ENCODE measurements at regions of chr9 and their contacts with region 1.

Region 1: GRCh38 chr9:72592502-72593403 is 71.3 kb downstream of the TMC1 start:
- DNase-seq: no peak
- H3K4me3 ChIP-seq: no peak overlapping the region
- H3K27ac ChIP-seq: peak overlapping the region in 3 of 4 donors; percentile 23 to 40 (median 33)
- H3K4me1 ChIP-seq: peaks cover 13 to 53% (median 31%) of the 10 kb centered on the region in 4 donors
- H3K27me3 ChIP-seq: no peaks in the 10 kb centered on the region
- CTCF ChIP-seq: peak; percentile 82 to 97 (median 88)
- EP300 ChIP-seq: no peak
- POLR2A ChIP-seq: no peak

Region 2: GRCh38 chr9:71806901-71807307 is 785.8 kb before region 1 on chr9:
- in situ Hi-C with region 1: loop called in 1 of 4 experiments (anchors 25 kb)
- intact Hi-C with region 1: no loop called
- DNase-seq: peak; percentile 62
- H3K4me3 ChIP-seq: no peak overlapping the region
- H3K27ac ChIP-seq: no peak overlapping the region
- H3K4me1 ChIP-seq: no peaks in the 10 kb centered on the region
- H3K27me3 ChIP-seq: no peaks in the 10 kb centered on the region
- CTCF ChIP-seq: peak; percentile 75 to 87 (median 83)
- EP300 ChIP-seq: no peak
- POLR2A ChIP-seq: no peak

Region 3: DNA sequence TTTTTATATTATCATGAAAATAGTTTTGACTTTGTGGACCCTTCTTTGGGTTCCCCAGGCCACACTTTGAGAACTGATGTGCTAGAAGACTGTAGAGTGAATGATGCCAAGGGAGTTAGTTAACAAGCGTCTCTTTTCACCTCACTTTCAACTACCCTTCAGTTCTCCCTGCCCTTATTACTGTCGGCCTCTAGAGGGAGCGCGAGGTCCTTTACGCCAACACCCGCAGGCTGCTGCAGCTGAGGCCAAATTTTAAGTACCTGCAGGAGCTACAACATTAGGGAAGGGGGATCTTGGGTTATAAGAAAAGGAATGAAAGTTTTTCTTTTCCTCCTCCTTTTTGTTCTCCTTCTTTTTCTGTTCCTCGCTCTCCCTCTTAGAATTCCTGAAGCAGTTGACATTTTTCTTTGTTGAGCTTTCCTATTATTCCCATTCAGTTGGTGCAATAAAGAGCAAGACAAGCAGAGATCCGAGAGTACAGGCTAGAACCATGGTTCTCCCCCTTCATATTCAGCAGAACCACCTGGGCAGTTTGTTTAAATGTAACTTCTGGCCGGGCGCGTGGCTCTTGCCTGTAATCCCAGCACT is 311.7 kb before region 1 on chr9:
- in situ Hi-C with region 1: loop called in 3 of 4 experiments (anchors 5 to 10 kb)
- intact Hi-C with region 1: loop called (anchors 5 kb)
- DNase-seq: peak; percentile 76
- H3K4me3 ChIP-seq: no peak overlapping the region
- H3K27ac ChIP-seq: no peak overlapping the region
- H3K4me1 ChIP-seq: peaks cover 0 to 9% (median 0%) of the 10 kb centered on the region in 4 donors
- H3K27me3 ChIP-seq: no peaks in the 10 kb centered on the region
- CTCF ChIP-seq: peak; percentile 83 to 93 (median 88)
- EP300 ChIP-seq: no peak
- POLR2A ChIP-seq: no peak

Region 4: GRCh38 chr9:72292256-72292682 is 300.5 kb before region 1 on chr9:
- in situ Hi-C with region 1: loop called in 2 of 4 experiments (anchors 5 to 10 kb)
- intact Hi-C with region 1: no loop called
- DNase-seq: no peak
- H3K4me3 ChIP-seq: no peak overlapping the region
- H3K27ac ChIP-seq: peak overlapping the region; percentile 74 to 83 (median 82)
- H3K4me1 ChIP-seq: peaks cover 11 to 44% (median 21%) of the 10 kb centered on the region in 4 donors
- H3K27me3 ChIP-seq: no peaks in the 10 kb centered on the region
- CTCF ChIP-seq: peak; percentile 56 to 75 (median 60)
- EP300 ChIP-seq: no peak
- POLR2A ChIP-seq: no peak

Region 5: GRCh38 chr9:72396247-72397091 is 196.3 kb before region 1 on chr9:
- in situ Hi-C with region 1: no loop called
- intact Hi-C with region 1: loop called (anchors 10 kb)
- DNase-seq: no peak
- H3K4me3 ChIP-seq: no peak overlapping the region
- H3K27ac ChIP-seq: peak overlapping the region in 2 of 4 donors; percentile 6 to 52
- H3K4me1 ChIP-seq: peaks cover 4 to 17% (median 7%) of the 10 kb centered on the region in 4 donors
- H3K27me3 ChIP-seq: no peaks in the 10 kb centered on the region
- CTCF ChIP-seq: no peak
- EP300 ChIP-seq: no peak
- POLR2A ChIP-seq: no peak

Region 6: DNA sequence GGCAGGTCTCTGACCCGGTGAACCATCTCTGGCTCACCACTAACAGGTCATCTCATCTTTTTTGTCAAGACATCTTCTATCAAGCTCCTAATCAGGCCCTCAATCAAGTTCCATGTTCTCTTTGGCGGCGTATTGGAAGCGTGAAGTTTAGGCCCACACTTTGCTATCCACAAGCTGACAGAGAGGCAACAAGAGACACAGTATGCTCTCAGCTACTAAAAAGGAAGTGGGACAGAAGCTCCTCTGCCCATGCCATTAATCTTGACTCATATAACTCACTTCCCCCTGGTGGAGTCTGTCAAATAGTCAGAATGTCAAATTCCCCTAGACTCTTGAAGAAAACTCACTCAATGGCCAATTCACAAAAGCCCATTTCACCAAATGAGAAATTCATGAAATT is 148.9 kb before region 1 on chr9:
- in situ Hi-C with region 1: no loop called
- intact Hi-C with region 1: loop called (anchors 10 kb)
- DNase-seq: no peak
- H3K4me3 ChIP-seq: no peak overlapping the region
- H3K27ac ChIP-seq: peak overlapping the region in 1 of 4 donors; percentile 22
- H3K4me1 ChIP-seq: peaks cover 0 to 7% (median 0%) of the 10 kb centered on the region in 4 donors
- H3K27me3 ChIP-seq: no peaks in the 10 kb centered on the region
- CTCF ChIP-seq: no peak
- EP300 ChIP-seq: no peak
- POLR2A ChIP-seq: no peak

Region 7: DNA sequence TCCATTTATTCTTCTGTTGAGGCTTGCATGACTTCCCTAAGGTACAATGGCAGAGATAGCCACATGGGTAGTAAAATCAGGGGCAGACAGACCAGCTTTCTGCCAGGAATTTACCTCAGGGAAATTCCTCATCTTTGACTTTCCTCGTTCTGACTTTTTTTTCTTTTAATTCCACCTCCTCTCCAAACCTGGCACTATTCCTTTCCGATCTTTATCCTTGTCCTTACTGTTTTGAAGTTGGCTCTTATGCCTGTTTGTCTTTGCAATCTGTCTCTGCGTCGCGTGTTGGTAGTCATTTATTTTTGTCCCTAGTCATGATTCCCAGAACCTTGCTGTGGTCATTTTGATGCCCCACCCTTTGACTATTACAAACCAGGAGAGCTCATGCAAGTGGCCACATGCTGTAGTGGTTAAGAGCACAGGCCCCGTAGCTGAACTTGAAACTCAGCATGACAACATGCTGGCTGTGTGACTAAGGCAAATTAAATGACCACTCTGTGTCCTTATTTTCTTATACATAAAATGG is 52.3 kb before region 1 on chr9:
- in situ Hi-C with region 1: no loop called
- intact Hi-C with region 1: loop called (anchors 5 kb)
- DNase-seq: no peak
- H3K4me3 ChIP-seq: no peak overlapping the region
- H3K27ac ChIP-seq: no peak overlapping the region
- H3K4me1 ChIP-seq: peaks cover 0 to 5% (median 0%) of the 10 kb centered on the region in 4 donors
- H3K27me3 ChIP-seq: no peaks in the 10 kb centered on the region
- CTCF ChIP-seq: no peak
- EP300 ChIP-seq: no peak
- POLR2A ChIP-seq: no peak

Measured in transverse colon (tissue), 4 donors.